Dorsolateral prefrontal cortex (tissue), 120 donors: ENCODE measurements at regions of chr5 and their contacts with region 1.

Region 1: DNA sequence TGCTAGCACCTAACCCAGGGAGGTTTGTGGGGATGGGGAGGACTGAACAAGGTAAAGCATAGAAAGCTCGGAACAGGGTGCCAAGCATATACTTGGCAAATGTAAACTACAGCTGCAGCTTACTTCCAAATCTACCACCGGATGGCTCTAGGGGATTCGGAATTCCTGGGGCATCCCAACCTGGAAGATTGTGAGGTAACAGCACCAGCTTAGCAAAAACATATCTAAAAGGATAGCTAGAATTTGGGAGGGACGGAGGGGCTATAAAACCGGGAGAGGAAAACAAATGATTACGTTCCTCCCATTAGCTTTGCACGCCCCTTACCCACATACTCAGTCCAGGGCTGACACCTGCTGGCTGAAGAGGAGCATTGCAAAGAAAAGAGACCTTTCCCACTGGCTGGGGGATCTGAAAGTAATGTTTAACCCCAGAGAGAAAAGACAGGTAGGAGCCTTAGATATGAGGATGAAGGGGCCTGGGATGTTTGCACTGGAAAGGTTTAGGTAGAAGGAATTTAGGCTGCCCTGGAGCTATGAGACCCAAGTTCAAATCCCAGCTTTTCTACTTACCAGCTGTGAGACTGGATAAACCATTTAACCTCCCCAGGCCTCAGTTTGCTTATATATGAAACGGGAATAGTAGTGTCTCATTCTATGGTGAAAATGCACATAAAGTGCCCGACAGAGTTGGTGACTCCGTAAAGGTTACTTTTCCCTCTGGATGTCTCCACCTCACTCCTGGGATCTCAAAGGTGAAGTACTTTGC is 73.6 kb downstream of the FAM114A2 start:
- DNase-seq: peak in 6 of 10 donors; percentile 17 to 66 (median 52)
- H3K4me3 ChIP-seq: peak overlapping the region in 52 of 59 donors; percentile 9 to 61 (median 44)
- H3K27ac ChIP-seq: peak overlapping the region in 1 of 59 donors; percentile 18
- H3K27me3 ChIP-seq: peaks cover 0 to 3% (median 0%) of the 10 kb centered on the region in 45 donors
- CTCF ChIP-seq: peak; percentile 74 to 97 (median 89)

Region 2: GRCh38 chr5:153496835-153497234 is 468.2 kb before region 1 on chr5:
- intact Hi-C with region 1: loop called in 1 of 2 experiments (anchors 2 kb)
- DNase-seq: no peak
- H3K4me3 ChIP-seq: peak overlapping the region in 1 of 59 donors; percentile 1
- H3K27ac ChIP-seq: no peak overlapping the region
- H3K27me3 ChIP-seq: peaks cover 0 to 4% (median 0%) of the 10 kb centered on the region in 45 donors
- CTCF ChIP-seq: peak; percentile 33 to 76 (median 61)

Region 3: DNA sequence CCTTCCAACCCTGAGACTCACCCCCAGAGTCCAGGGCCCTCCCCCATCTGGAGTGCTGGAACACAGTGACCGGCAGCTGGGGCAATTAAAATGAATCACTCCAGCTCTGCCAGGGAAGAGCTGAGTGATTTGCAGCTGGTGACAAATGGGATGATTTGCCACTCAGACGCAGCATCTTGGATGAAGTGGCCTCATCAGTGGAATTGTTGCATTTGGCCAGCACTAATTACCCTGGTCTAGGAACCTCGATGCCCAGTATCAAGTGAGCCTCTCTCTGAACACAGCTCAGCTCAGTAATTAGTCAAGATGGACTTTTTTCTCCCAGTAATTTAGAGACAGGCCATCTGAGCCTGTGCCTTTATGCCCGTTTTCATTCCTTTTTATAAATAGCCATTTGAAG is 215.1 kb before region 1 on chr5:
- intact Hi-C with region 1: no loop called
- DNase-seq: peak in 4 of 10 donors; percentile 10 to 59 (median 33)
- H3K4me3 ChIP-seq: no peak overlapping the region
- H3K27ac ChIP-seq: peak overlapping the region in 8 of 59 donors; percentile 4 to 44 (median 24)
- H3K27me3 ChIP-seq: no peaks in the 10 kb centered on the region
- CTCF ChIP-seq: no peak